Ascending aorta (tissue), 2 donors: ENCODE measurements at regions of chr11 and their contacts with region 1.

Region 1: GRCh38 chr11:79100093-79100910 is 340.5 kb downstream of the TENM4 start:
- DNase-seq: no peak
- H3K4me3 ChIP-seq: no peak overlapping the region
- H3K27ac ChIP-seq: no peak overlapping the region
- H3K4me1 ChIP-seq: peaks cover 0 to 10% of the 10 kb centered on the region in 2 donors
- H3K27me3 ChIP-seq: no peaks in the 10 kb centered on the region
- CTCF ChIP-seq: peak; percentile 53 to 80 (median 70)

Region 2: DNA sequence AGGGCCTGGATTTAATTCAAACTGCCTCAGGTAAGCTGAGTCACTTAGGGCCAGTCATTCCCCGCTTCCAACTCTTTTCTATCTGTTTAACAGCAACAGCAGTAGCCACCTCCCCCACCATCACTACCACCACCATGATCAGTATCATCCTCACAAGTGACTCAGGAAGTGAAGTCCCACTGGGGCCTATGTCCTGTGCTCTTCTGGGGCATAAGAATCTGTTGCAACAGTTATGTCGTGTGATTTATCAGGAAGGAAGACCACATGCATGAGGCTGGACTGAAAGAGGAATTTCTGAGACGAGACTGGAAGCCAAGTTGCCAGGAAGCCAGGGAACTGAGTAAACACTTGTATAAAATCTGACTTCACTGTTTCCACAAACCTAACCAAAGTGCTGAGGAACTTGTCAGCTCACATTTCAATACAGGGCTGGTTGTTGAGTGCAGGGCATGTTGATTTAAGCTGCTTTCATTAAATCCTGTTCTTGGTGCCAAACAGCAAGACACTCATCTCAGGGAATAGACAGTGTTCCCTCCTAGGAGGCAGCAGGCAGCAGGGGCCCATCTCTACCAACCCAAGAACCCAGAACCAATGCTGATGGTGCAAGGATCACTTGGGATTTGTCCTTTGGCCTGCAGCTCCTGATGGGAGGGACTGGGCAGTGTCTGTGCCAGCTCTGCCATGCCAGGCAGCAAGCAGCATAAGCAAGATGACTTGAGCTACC is 299.0 kb before region 1 on chr11:
- intact Hi-C with region 1: loop called (anchors 5 kb)
- DNase-seq: peak in 1 of 2 donors; percentile 83
- H3K4me3 ChIP-seq: no peak overlapping the region
- H3K27ac ChIP-seq: peak overlapping the region; percentile 69 to 75
- H3K4me1 ChIP-seq: peaks cover 19 to 30% of the 10 kb centered on the region in 2 donors
- H3K27me3 ChIP-seq: no peaks in the 10 kb centered on the region
- CTCF ChIP-seq: no peak

Region 3: DNA sequence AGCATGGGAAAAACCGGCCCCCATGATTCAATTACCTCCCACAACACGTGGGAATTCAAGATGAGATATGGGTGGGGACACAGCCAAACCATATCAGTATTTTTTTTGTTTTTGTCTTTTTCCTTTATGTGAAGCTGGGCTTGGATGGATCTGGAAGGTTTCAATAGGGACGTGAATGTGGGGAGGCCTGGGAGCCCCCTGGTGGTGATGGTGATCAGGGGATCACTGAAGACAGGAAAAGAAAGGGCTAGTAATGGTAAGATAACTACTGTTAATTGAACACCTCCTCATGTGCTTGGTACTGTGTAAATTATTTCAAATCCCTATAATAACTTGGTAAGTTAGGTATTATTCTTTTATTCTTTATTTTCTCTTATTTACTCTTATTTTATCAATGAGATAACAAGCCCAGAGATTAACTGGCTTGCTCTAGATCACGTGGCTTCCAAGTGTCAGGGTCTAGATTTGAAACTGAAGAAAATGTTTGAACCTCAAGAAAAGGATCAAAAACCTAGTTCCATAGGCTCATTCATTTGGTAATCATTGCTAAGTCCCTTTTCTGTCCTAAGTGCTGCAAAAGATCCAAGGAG is 23.7 kb before region 1 on chr11:
- intact Hi-C with region 1: no loop called
- DNase-seq: no peak
- H3K4me3 ChIP-seq: no peak overlapping the region
- H3K27ac ChIP-seq: no peak overlapping the region
- H3K4me1 ChIP-seq: peaks cover 0 to 2% of the 10 kb centered on the region in 2 donors
- H3K27me3 ChIP-seq: no peaks in the 10 kb centered on the region
- CTCF ChIP-seq: peak; percentile 19 to 59 (median 44)

Region 4: DNA sequence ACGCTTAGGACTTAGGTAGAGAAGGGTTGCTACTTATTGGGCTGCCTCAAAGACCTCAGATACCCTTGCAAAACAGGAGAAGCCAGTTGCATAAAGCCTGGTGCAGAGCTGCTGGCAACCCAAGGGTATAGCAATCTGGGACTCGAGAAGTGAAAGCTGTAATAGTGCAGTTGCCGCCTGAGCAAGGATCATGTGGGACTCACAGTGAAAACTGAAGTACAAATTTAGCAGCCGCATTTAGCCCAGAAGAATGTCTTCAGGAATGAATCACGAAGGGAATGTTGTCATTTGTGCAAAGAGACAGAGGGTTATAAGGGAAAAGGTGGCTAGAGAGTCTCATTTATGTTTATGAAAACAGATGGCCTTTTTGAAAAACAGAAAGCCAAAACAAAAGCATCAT is 73.3 kb after region 1 on chr11:
- intact Hi-C with region 1: loop called (anchors 5 kb)
- DNase-seq: peak in 1 of 2 donors; percentile 80
- H3K4me3 ChIP-seq: peak overlapping the region; percentile 12 to 14
- H3K27ac ChIP-seq: peak overlapping the region; percentile 59 to 61
- H3K4me1 ChIP-seq: peaks cover 0 to 11% of the 10 kb centered on the region in 2 donors
- H3K27me3 ChIP-seq: no peaks in the 10 kb centered on the region
- CTCF ChIP-seq: peak in 1 of 3 experiments; percentile 6

Region 5: DNA sequence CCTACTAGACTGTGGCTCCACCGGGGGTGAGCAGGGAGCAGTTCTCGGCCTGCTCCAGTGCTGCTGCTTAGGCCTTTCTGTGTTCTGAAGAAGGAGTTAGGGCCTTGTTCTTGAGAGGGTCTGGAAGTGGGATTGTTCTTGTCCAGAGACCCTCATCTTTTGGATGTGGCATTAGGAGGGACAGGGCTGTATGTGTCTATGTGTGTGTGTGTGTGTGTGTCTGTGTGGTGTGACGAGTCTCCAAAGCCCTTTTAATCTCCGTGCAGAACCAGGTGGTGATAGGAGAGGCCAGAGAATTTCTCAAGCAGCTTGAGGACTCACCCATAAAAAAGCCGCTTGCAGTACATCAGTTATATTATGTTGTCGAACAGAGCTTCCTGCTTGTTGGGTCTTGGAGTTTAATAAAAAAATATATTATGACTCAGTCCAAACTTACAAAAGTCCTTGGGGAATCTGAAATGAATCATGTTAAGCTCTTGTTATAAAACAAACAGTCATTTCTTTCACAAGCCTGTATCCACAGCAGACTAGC is 144.0 kb after region 1 on chr11:
- intact Hi-C with region 1: loop called (anchors 5 kb)
- DNase-seq: peak in 1 of 2 donors; percentile 68
- H3K4me3 ChIP-seq: no peak overlapping the region
- H3K27ac ChIP-seq: peak overlapping the region; percentile 78 to 89
- H3K4me1 ChIP-seq: peaks cover 5 to 23% of the 10 kb centered on the region in 2 donors
- H3K27me3 ChIP-seq: no peaks in the 10 kb centered on the region
- CTCF ChIP-seq: no peak

Region 6: GRCh38 chr11:79421820-79422219 is 321.5 kb after region 1 on chr11:
- intact Hi-C with region 1: loop called (anchors 5 kb)
- DNase-seq: no peak
- H3K4me3 ChIP-seq: no peak overlapping the region
- H3K27ac ChIP-seq: peak overlapping the region; percentile 67 to 72
- H3K4me1 ChIP-seq: peaks cover 7 to 12% of the 10 kb centered on the region in 2 donors
- H3K27me3 ChIP-seq: no peaks in the 10 kb centered on the region
- CTCF ChIP-seq: no peak